ENCODE measurements at regions of chr2 and their contacts with region 1.

Region 1: DNA sequence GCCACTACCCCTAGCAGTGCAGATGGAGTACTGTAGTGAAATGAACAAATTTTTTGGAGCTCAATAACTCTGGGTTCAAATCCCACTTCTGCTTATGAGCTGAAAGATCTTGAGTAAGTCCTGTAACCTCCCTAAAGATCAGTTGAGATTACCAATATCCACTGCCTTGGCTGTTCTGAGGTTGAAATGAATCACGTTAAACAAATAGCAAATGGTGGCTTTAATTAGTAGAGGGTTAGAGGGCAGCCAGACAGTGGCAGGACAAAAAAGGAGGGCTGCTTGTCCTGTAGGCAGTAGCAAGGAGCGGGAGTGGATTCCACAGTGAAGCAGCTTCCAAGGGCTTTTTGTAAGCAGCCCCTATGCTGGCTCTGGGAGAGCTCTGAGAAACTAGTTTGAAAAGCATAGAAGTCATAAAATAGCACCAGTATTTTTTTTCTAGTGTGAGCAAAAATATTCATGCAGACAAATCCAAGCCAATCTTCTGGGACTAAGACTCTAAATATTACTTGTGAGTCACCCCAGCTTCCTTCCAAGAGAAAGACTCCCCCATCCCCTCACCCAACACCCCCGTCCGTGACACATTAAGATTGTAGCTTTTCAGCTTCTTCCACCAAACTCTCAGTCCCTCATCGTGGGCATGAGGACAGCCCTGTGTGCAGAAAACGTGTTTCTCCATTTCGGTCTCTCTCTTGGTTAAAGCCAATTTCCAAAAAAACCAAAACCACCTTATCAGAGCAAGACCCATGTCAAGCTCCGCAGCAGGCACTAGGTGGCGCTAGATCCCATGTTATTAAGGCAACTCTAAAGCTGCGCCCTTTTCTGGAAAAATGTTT is 123.5 kb upstream of the LGALSL start:
- DNase-seq: peak; percentile 81
- H3K4me3 Mint-ChIP-seq: peak overlapping the region; percentile 49
- H3K27ac Mint-ChIP-seq: peak overlapping the region; percentile 64
- H3K4me1 Mint-ChIP-seq: peaks cover 6% of the 10 kb centered on the region
- H3K27me3 Mint-ChIP-seq: no peaks in the 10 kb centered on the region
- CTCF ChIP-seq: peak; percentile 94

Region 2: DNA sequence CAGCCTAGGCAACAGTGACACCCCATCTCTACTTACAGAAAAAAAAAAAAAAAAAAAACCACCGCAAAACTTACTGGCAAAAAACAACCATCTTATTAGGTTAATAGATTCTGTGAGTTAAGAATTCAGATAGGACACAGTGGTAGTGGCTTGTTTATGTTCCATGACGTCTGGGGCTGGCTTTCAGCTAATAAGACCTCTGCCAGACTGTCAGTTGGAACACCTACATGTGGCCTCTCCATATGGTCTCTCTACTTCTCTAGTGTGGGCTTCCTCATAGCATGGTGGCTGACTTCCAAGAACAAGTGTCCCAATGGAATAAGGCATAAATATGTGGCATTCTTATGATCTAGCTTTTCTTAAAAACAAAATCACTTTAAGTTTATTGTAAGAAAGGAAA is 1373.8 kb before region 1 on chr2:
- CTCF ChIA-PET with region 1: no interaction called
- POLR2A ChIA-PET with region 1: no interaction called
- intact Hi-C with region 1: no loop called
- DNase-seq: no peak
- H3K4me3 Mint-ChIP-seq: no peak overlapping the region
- H3K27ac Mint-ChIP-seq: no peak overlapping the region
- H3K4me1 Mint-ChIP-seq: no peaks in the 10 kb centered on the region
- H3K27me3 Mint-ChIP-seq: no peaks in the 10 kb centered on the region
- CTCF ChIP-seq: no peak

Region 3: GRCh38 chr2:64318476-64318748 is 12.1 kb before region 1 on chr2:
- CTCF ChIA-PET with region 1: interaction called, 48 read pairs
- POLR2A ChIA-PET with region 1: no interaction called
- intact Hi-C with region 1: no loop called
- DNase-seq: no peak
- H3K4me3 Mint-ChIP-seq: no peak overlapping the region
- H3K27ac Mint-ChIP-seq: no peak overlapping the region
- H3K4me1 Mint-ChIP-seq: no peaks in the 10 kb centered on the region
- H3K27me3 Mint-ChIP-seq: peaks cover 19% of the 10 kb centered on the region
- CTCF ChIP-seq: no peak

Region 4: GRCh38 chr2:64463781-64464180 is 133.3 kb after region 1 on chr2:
- CTCF ChIA-PET with region 1: interaction called, 10 read pairs
- POLR2A ChIA-PET with region 1: no interaction called
- intact Hi-C with region 1: no loop called
- DNase-seq: peak; percentile 84
- H3K4me3 Mint-ChIP-seq: no peak overlapping the region
- H3K27ac Mint-ChIP-seq: no peak overlapping the region
- H3K4me1 Mint-ChIP-seq: peaks cover 12% of the 10 kb centered on the region
- H3K27me3 Mint-ChIP-seq: no peaks in the 10 kb centered on the region
- CTCF ChIP-seq: no peak

Region 5: DNA sequence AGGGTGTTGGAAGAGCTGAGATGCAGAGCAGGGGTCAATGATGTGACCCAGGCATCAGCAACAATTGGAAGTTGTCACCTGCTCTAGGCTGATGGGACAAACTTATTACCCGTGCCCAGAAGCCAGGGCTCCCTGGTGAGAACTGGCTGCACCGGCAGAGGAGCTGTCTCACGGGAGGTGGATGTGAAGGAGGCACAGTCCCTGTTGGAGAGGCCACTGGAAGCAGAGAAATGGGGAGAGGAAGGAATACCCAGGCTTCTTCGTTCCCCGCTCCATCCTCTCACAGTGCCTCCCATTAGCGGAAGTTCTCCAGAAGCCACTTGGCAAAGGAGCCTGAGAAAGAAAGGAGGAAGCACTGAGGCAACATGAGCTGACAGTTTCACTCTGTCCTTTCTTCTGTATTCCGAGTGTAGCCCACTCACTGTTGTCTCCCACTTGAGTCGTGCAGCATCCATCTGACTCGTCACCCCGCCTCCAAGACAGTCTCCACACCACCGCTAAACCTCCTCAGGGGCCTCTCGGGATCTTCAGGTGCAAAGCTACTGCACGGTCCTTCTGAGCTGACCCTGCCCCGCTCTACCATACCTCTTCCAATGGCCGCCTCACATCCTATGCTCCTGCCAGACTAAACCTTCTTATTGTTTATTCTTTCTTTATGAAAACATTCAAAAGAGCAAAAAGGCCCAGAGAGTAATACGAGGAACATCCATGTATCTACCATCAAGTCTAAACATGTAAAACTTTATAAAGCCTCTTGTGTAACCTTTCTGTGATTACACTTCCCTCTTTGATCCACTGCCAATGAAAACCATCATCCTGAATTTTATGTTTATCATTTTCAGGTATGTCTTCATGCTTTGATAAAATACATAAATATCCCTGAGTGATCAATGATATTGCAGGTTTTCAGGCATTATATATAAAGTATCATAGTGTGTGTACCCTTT is 174.6 kb after region 1 on chr2:
- CTCF ChIA-PET with region 1: interaction called, 44 read pairs
- POLR2A ChIA-PET with region 1: no interaction called
- intact Hi-C with region 1: no loop called
- DNase-seq: no peak
- H3K4me3 Mint-ChIP-seq: no peak overlapping the region
- H3K27ac Mint-ChIP-seq: no peak overlapping the region
- H3K4me1 Mint-ChIP-seq: peaks cover 9% of the 10 kb centered on the region
- H3K27me3 Mint-ChIP-seq: no peaks in the 10 kb centered on the region
- CTCF ChIP-seq: no peak

Region 6: GRCh38 chr2:64865073-64865830 is 534.8 kb after region 1 on chr2:
- CTCF ChIA-PET with region 1: interaction called, 11 read pairs
- POLR2A ChIA-PET with region 1: no interaction called
- intact Hi-C with region 1: loop called (anchors 5 kb)
- DNase-seq: peak; percentile 68
- H3K4me3 Mint-ChIP-seq: peak overlapping the region; percentile 64
- H3K27ac Mint-ChIP-seq: no peak overlapping the region
- H3K4me1 Mint-ChIP-seq: peaks cover 7% of the 10 kb centered on the region
- H3K27me3 Mint-ChIP-seq: no peaks in the 10 kb centered on the region
- CTCF ChIP-seq: peak; percentile 86

Measured in MCF 10A (cell line).